Naive thymus-derived CD4-positive, alpha-beta T cell (primary cell): ENCODE measurements at regions of chr4 and their contacts with region 1.

Region 1: DNA sequence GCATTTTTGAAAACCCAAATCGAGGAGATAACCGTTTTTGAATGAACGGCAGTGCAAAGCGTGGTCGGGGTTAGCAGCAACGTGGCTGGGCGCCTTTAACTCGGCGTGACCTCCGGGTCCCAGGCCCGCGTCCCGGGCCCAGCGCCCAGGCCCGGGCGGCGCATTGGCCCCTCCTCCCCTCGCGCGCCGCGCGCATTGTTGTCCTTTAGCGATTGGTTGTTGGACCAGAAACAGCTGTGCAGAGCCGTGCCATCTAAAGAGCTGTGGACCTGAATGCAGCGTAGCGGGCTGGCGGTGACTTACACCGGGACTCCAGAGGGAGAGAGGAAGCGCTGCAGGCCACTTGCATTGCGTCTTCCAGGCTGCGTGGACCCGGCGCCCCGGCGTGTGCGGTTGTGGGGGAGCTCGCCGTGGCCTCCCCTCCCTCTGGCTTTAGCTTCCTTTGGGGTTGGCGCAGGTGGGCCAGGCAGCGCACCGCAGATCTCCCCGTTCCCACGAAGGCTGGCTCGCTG is at the start of gene STOX2:
- DNase-seq: peak in 1 of 9 donors; percentile 22
- ATAC-seq: peak; percentile 40
- H3K4me3 ChIP-seq: no peak within 1 kb of the TSS
- H3K4me3 Mint-ChIP-seq: peak within 1 kb of the TSS in 9 of 10 donors; percentile 41 to 78 (median 63)
- H3K27ac ChIP-seq: no peak within 1 kb of the TSS
- H3K27ac Mint-ChIP-seq: no peak within 1 kb of the TSS
- H3K4me1 ChIP-seq: peaks cover 0 to 5% of the 10 kb centered on the region in 2 donors
- H3K4me1 Mint-ChIP-seq: peaks cover 0 to 10% (median 4%) of the 10 kb centered on the region in 7 donors
- H3K27me3 ChIP-seq: peaks cover 0 to 4% of the 10 kb centered on the region in 2 donors
- H3K27me3 Mint-ChIP-seq: peaks cover 25 to 82% (median 60%) of the 10 kb centered on the region in 5 donors
- total RNA-seq, gene STOX2: not detected

Region 2: DNA sequence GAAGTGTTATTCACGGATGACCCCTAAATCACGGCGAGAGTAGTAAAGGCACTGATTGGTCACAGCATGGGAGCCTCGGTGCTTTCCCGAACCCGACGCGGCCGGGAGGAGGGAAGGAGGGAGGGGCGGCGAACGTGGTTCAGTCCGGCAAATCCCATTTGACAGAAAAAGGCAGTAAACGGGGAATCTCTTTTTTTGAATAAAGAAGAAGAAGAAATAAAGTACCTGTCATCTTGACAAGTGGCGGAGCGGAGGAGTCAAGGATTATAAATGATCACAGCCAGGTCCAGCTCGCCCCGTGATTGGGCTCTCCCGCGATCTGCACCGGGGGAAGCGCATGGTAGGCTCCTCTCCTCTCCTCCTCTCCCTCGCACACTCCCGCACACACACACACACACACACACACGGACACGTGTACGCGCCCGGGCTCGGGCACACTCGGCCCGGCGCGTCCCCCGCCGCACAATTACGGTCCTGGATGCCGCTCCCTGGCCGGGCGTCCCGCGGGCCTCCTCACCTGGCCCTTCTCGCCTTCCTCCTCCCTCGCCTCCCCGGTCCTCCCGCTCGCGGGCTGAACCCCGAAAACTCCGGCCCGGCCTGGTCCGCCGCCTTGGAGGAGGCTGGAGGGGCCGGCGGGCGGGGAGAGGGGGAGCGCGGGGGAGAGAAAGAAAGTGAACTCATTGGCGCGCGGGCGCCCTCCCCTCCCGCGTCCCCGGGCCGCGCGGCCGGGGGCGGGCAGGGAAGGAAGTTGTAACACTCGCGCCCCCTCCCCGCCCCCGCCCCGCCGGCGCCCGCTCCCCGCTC is 1761.1 kb before region 1 on chr4:
- CTCF ChIA-PET with region 1: no interaction called
- POLR2A ChIA-PET with region 1: no interaction called
- intact Hi-C with region 1: loop called in 1 of 2 experiments (anchors 10 kb)
- DNase-seq: no peak
- ATAC-seq: no peak
- H3K4me3 ChIP-seq: no peak overlapping the region
- H3K4me3 Mint-ChIP-seq: peak overlapping the region; percentile 56 to 84 (median 66)
- H3K27ac ChIP-seq: no peak overlapping the region
- H3K27ac Mint-ChIP-seq: peak overlapping the region in 1 of 9 donors; percentile 42
- H3K4me1 ChIP-seq: no peaks in the 10 kb centered on the region
- H3K4me1 Mint-ChIP-seq: peaks cover 0 to 29% (median 17%) of the 10 kb centered on the region in 7 donors
- H3K27me3 ChIP-seq: peaks cover 0 to 7% of the 10 kb centered on the region in 2 donors
- H3K27me3 Mint-ChIP-seq: peaks cover 61 to 74% (median 71%) of the 10 kb centered on the region in 5 donors

Region 3: GRCh38 chr4:185011408-185011807 is 1106.3 kb after region 1 on chr4:
- CTCF ChIA-PET with region 1: no interaction called
- POLR2A ChIA-PET with region 1: no interaction called
- intact Hi-C with region 1: loop called in 1 of 2 experiments (anchors 2 kb)
- DNase-seq: peak in 4 of 9 donors; percentile 11 to 22 (median 12)
- ATAC-seq: no peak
- H3K4me3 ChIP-seq: no peak overlapping the region
- H3K4me3 Mint-ChIP-seq: no peak overlapping the region
- H3K27ac ChIP-seq: no peak overlapping the region
- H3K27ac Mint-ChIP-seq: no peak overlapping the region
- H3K4me1 ChIP-seq: no peaks in the 10 kb centered on the region
- H3K4me1 Mint-ChIP-seq: peaks cover 0 to 17% (median 7%) of the 10 kb centered on the region in 7 donors
- H3K27me3 ChIP-seq: no peaks in the 10 kb centered on the region
- H3K27me3 Mint-ChIP-seq: peaks cover 74 to 96% (median 76%) of the 10 kb centered on the region in 5 donors